ENCODE measurements at regions of chrX and their contacts with region 1.

Region 1: GRCh38 chrX:101407748-101408531 is at the starts of genes GLA and HNRNPH2:
- DNase-seq: peak; percentile 96
- H3K4me3 Mint-ChIP-seq: peak within 1 kb of the TSS; percentile 100
- H3K27ac Mint-ChIP-seq: peak within 1 kb of the TSS; percentile 98
- H3K4me1 Mint-ChIP-seq: peaks cover 19% of the 10 kb centered on the region
- H3K27me3 Mint-ChIP-seq: peaks cover 2% of the 10 kb centered on the region
- total RNA-seq, gene GLA: 66.6 and 70.7 TPM in 2 replicates
- total RNA-seq, gene HNRNPH2: 19.9 and 21.5 TPM in 2 replicates

Region 2: GRCh38 chrX:100625985-100626491 is 781.9 kb before region 1 on chrX:
- intact Hi-C with region 1: no loop called
- DNase-seq: no peak
- H3K4me3 Mint-ChIP-seq: no peak overlapping the region
- H3K27ac Mint-ChIP-seq: no peak overlapping the region
- H3K4me1 Mint-ChIP-seq: peaks cover 7% of the 10 kb centered on the region
- H3K27me3 Mint-ChIP-seq: no peaks in the 10 kb centered on the region

Region 3: GRCh38 chrX:100829730-100830129 is 578.2 kb before region 1 on chrX:
- intact Hi-C with region 1: loop called (anchors 5 kb)
- DNase-seq: peak; percentile 66
- H3K4me3 Mint-ChIP-seq: peak overlapping the region; percentile 81
- H3K27ac Mint-ChIP-seq: peak overlapping the region; percentile 97
- H3K4me1 Mint-ChIP-seq: peaks cover 24% of the 10 kb centered on the region
- H3K27me3 Mint-ChIP-seq: no peaks in the 10 kb centered on the region

Region 4: GRCh38 chrX:101097546-101098453 is 310.1 kb before region 1 on chrX and contains the start of gene CENPI:
- intact Hi-C with region 1: loop called (anchors 5 kb)
- DNase-seq: peak; percentile 98
- H3K4me3 Mint-ChIP-seq: peak within 1 kb of the TSS; percentile 96
- H3K27ac Mint-ChIP-seq: peak within 1 kb of the TSS; percentile 89
- H3K4me1 Mint-ChIP-seq: peaks cover 24% of the 10 kb centered on the region
- H3K27me3 Mint-ChIP-seq: no peaks in the 10 kb centered on the region
- total RNA-seq, gene CENPI: 14.9 and 19.4 TPM in 2 replicates

Region 5: GRCh38 chrX:101348452-101349192 is 59.3 kb before region 1 on chrX and contains the start of gene TIMM8A:
- intact Hi-C with region 1: loop called (anchors 5 kb)
- DNase-seq: peak; percentile 94
- H3K4me3 Mint-ChIP-seq: peak within 1 kb of the TSS; percentile 92
- H3K27ac Mint-ChIP-seq: peak within 1 kb of the TSS; percentile 93
- H3K4me1 Mint-ChIP-seq: peaks cover 2% of the 10 kb centered on the region
- H3K27me3 Mint-ChIP-seq: no peaks in the 10 kb centered on the region
- total RNA-seq, gene TIMM8A: 28.3 and 32.8 TPM in 2 replicates

Region 6: GRCh38 chrX:101377547-101377946 is 30.4 kb before region 1 on chrX:
- intact Hi-C with region 1: no loop called
- DNase-seq: no peak
- H3K4me3 Mint-ChIP-seq: no peak overlapping the region
- H3K27ac Mint-ChIP-seq: no peak overlapping the region
- H3K4me1 Mint-ChIP-seq: no peaks in the 10 kb centered on the region
- H3K27me3 Mint-ChIP-seq: peaks cover 8% of the 10 kb centered on the region

Region 7: GRCh38 chrX:101390664-101391525 is 17.0 kb before region 1 on chrX and contains the start of gene RPL36A:
- intact Hi-C with region 1: loop called (anchors 1 kb)
- DNase-seq: peak; percentile 94
- H3K4me3 Mint-ChIP-seq: peak within 1 kb of the TSS; percentile 97
- H3K27ac Mint-ChIP-seq: peak within 1 kb of the TSS; percentile 98
- H3K4me1 Mint-ChIP-seq: peaks cover 10% of the 10 kb centered on the region
- H3K27me3 Mint-ChIP-seq: no peaks in the 10 kb centered on the region
- total RNA-seq, gene RPL36A: 252 and 278 TPM in 2 replicates

Region 8: DNA sequence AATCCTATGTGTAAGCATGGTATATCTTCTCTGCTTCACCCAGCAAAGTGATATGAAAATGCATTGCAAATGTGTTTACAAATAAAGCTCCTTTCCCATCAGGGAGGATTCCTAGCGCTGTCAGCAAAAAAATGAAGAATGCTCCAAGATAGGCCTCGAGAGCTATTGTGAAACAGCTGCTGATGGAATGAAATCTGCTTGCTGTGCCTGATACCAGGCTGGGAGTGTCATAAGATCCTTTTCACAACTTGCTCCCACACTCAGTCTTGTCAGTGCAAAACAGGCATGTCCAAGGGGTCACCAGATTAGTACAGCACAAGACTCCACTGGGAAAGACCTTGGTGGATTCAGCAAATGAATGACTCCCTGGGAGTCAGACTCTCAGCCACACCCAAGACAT is 34.1 kb after region 1 on chrX:
- intact Hi-C with region 1: no loop called
- DNase-seq: no peak
- H3K4me3 Mint-ChIP-seq: no peak overlapping the region
- H3K27ac Mint-ChIP-seq: no peak overlapping the region
- H3K4me1 Mint-ChIP-seq: peaks cover 2% of the 10 kb centered on the region
- H3K27me3 Mint-ChIP-seq: no peaks in the 10 kb centered on the region

Region 9: GRCh38 chrX:101736651-101737050 is 328.7 kb after region 1 on chrX:
- intact Hi-C with region 1: no loop called
- DNase-seq: no peak
- H3K4me3 Mint-ChIP-seq: no peak overlapping the region
- H3K27ac Mint-ChIP-seq: no peak overlapping the region
- H3K4me1 Mint-ChIP-seq: no peaks in the 10 kb centered on the region
- H3K27me3 Mint-ChIP-seq: no peaks in the 10 kb centered on the region